ENCODE measurements at regions of chr17 and their contacts with region 1.

Region 1: GRCh38 chr17:57855391-57856035 is 5.7 kb upstream of the MRPS23 start:
- DNase-seq: no peak
- H3K4me3 ChIP-seq: no peak overlapping the region
- H3K27ac ChIP-seq: no peak overlapping the region
- H3K4me1 ChIP-seq: peaks cover 7% of the 10 kb centered on the region
- H3K27me3 ChIP-seq: no peaks in the 10 kb centered on the region
- CTCF ChIP-seq: no peak

Region 2: DNA sequence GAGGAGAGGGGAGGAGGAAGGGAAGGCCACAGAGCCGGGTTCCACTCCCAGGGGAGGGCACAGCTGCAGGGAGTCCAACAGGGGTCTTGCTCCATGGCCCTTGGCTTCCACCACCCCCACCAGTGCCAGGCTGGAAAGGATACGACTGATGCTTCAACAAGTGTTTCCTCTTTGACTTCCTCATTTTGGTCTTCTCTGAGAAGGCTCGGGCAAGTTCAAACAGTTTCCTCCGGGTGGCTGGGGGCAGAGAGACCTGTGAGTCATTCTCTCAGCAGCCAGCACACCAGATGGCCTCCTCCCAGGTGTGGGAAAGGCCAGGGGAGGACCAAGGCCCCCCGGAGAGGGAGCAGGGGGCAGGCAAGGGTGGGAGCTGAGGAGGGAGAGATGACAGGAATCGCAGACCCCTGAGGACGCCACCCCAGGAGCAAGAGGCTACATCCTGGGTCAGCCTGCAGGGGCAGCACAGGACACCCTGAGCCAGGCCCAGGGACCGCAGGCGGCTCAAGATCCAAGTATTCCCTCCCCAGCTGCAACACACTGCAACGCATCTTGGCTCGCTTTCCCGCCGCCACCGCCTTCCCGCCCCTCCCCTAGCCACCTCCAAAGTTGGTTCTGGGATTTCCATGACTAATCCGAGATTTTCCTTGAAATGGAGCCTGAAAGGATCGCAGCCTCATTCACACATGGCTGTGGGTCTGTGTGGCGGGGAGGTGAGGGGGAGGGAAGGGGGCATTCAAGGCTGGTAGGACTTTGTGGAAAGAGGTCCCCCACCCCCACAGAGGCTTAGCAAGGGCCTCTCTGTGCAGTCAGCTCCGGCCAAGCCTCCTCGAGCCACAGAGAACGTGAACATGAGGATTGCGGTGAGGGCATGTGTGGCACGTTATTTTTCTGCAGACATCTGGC is 12.7 kb after region 1 on chr17:
- CTCF ChIA-PET with region 1: no interaction called
- dilution Hi-C with region 1: no loop called
- in situ Hi-C with region 1: no loop called
- intact Hi-C with region 1: loop called (anchors 1 kb)
- DNase-seq: peak; percentile 92
- H3K4me3 ChIP-seq: peak overlapping the region in 1 of 3 experiments; percentile 23
- H3K27ac ChIP-seq: peak overlapping the region; percentile 64
- H3K4me1 ChIP-seq: peaks cover 39% of the 10 kb centered on the region
- H3K27me3 ChIP-seq: no peaks in the 10 kb centered on the region
- CTCF ChIP-seq: peak; percentile 19 to 46

Region 3: GRCh38 chr17:57892146-57892828 is 36.8 kb after region 1 on chr17:
- CTCF ChIA-PET with region 1: no interaction called
- dilution Hi-C with region 1: no loop called
- in situ Hi-C with region 1: no loop called
- intact Hi-C with region 1: loop called (anchors 1 kb)
- DNase-seq: no peak
- H3K4me3 ChIP-seq: no peak overlapping the region
- H3K27ac ChIP-seq: peak overlapping the region; percentile 45
- H3K4me1 ChIP-seq: peaks cover 35% of the 10 kb centered on the region
- H3K27me3 ChIP-seq: no peaks in the 10 kb centered on the region
- CTCF ChIP-seq: peak; percentile 96 to 99

Region 4: GRCh38 chr17:57911834-57912673 is 56.5 kb after region 1 on chr17:
- CTCF ChIA-PET with region 1: no interaction called
- dilution Hi-C with region 1: no loop called
- in situ Hi-C with region 1: no loop called
- intact Hi-C with region 1: no loop called
- DNase-seq: peak; percentile 82
- H3K4me3 ChIP-seq: no peak overlapping the region
- H3K27ac ChIP-seq: peak overlapping the region; percentile 45
- H3K4me1 ChIP-seq: peaks cover 13% of the 10 kb centered on the region
- H3K27me3 ChIP-seq: no peaks in the 10 kb centered on the region
- CTCF ChIP-seq: no peak

Region 5: DNA sequence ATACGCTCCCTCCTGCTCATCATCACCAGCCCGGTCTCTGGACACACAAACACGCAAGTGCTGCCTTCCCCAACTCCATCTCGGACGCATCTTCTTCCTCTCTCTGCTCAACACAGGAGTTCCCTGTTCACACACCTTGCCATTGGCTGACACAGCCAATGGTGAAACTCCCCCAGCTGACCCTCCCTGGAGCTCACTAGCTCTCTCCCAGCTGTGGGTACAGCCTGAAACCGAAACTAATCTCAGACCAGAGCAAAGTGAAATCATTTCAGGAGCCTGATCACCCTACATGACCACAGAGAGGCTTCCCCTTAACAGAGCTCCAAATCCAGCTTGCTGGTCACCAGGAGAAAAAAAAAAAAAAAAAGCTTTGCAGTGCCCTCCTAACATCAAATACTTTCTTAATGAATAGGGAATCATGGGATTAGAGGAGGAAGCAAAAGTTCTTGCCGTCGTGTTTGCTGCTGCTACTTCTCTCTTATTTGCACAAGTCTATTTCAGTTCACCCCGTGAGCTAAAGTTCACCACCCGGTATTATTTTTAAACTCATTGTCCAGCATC is 91.4 kb after region 1 on chr17:
- CTCF ChIA-PET with region 1: no interaction called
- dilution Hi-C with region 1: no loop called
- in situ Hi-C with region 1: no loop called
- intact Hi-C with region 1: loop called (anchors 1 kb)
- DNase-seq: peak; percentile 69
- H3K4me3 ChIP-seq: no peak overlapping the region
- H3K27ac ChIP-seq: no peak overlapping the region
- H3K4me1 ChIP-seq: peaks cover 39% of the 10 kb centered on the region
- H3K27me3 ChIP-seq: no peaks in the 10 kb centered on the region
- CTCF ChIP-seq: no peak

Region 6: DNA sequence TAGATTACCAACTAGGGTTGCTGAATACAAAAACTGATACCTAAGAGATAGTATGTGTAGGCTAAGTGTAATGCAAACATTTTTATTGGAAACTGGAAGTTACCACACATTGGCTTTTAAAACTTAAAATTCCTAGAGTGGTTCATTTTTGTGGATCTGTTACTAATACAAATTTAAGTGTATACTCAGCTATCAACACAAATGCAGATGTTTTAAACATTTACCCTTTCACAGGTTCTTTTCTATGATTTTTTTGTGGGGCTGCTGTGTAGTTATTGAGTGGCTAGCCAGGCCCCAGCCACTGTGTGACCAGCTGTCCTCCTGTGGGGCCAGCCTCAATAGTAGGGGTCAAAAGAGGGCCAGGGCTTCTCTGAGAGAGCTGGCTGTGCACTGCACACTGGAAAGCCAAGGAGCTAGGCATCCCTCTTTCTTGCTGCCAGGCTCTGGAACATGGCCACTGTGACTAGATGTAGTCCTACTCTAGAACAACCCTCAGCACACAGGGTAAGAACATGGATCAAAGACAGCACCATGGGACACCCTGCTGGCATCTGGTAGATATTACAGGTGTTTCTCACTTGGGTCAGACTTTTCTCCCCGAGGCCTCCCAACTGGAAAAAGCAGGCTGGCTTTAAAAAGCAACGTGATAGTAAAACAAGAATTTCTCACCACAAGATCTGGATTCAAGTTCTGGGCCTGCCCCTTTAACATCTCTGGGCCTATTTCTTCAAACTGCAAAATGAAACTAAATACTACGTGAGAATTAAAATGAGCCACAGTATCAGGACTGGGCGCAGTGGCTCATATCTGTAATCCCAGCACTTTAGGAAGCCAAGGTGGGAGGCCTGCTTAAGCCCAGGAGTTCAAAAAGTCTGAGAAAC is 139.8 kb after region 1 on chr17:
- CTCF ChIA-PET with region 1: interaction called, 7 read pairs
- dilution Hi-C with region 1: loop called (anchors 5 kb)
- in situ Hi-C with region 1: loop called (anchors 5 kb)
- intact Hi-C with region 1: loop called (anchors 1 kb)
- DNase-seq: peak; percentile 61
- H3K4me3 ChIP-seq: no peak overlapping the region
- H3K27ac ChIP-seq: no peak overlapping the region
- H3K4me1 ChIP-seq: no peaks in the 10 kb centered on the region
- H3K27me3 ChIP-seq: no peaks in the 10 kb centered on the region
- CTCF ChIP-seq: peak; percentile 69 to 81

Measured in mammary epithelial cell (primary cell).